ENCODE measurements at regions of chr6 and their contacts with region 1.

Region 1: GRCh38 chr6:109187399-109188114 is 92.2 kb downstream of the CEP57L1 start:
- DNase-seq: no peak
- H3K4me3 ChIP-seq: no peak overlapping the region
- H3K27ac ChIP-seq: no peak overlapping the region
- H3K4me1 ChIP-seq: peaks cover 0 to 10% (median 0%) of the 10 kb centered on the region in 3 donors
- H3K27me3 ChIP-seq: peaks cover 0 to 21% (median 0%) of the 10 kb centered on the region in 4 donors
- CTCF ChIP-seq: peak; percentile 76 to 94 (median 82)
- POLR2A ChIP-seq: no peak

Region 2: DNA sequence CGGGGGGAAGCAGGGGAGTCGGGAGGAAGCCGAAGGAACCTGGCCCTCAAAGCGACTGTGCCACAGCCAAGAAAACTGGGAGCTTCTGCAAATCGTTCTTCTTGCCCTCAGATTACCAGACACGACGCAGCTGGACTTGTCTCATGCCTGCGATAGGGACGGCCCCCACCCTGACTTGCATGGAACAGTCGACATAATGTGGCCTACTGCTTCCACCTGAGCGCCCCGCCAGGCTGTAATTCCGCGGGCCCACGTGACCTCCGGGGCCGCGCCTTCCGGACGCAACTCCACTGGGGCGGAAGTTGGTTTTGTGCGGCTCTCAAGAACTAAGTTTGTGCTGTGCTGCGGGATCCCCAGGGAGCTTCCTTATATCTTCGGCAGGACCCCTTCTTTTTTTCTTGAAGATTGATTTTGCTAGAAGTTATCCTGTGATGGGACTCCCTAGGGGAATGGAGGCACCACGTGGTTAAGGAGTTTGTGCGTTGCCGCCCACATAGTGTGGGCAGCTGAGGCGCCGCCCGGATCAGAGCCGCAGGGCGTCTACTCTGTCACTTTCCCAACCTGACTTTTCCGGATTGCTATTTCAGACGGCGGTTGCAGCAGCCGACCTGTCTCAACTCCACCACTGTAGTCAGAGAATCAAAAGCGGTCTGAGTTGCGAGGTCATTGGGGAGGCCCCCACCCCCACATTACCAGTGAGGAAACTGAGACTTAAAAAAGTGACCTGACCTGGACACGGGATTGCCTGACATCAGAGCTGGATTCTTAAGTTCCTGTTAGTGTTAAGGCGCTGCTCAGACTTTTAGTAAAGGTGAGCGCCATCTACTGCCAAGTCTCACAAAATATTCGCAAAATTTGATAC is 195.2 kb after region 1 on chr6:
- intact Hi-C with region 1: loop called (anchors 10 kb)
- DNase-seq: peak; percentile 87
- H3K4me3 ChIP-seq: peak overlapping the region; percentile 80 to 97 (median 95)
- H3K27ac ChIP-seq: peak overlapping the region; percentile 100
- H3K4me1 ChIP-seq: peaks cover 7 to 55% (median 18%) of the 10 kb centered on the region in 3 donors
- H3K27me3 ChIP-seq: no peaks in the 10 kb centered on the region
- CTCF ChIP-seq: peak; percentile 36 to 63 (median 54)
- POLR2A ChIP-seq: peak in 2 of 4 donors; percentile 25 to 55